ENCODE measurements at regions of chr22 and their contacts with region 1.

Region 1: DNA sequence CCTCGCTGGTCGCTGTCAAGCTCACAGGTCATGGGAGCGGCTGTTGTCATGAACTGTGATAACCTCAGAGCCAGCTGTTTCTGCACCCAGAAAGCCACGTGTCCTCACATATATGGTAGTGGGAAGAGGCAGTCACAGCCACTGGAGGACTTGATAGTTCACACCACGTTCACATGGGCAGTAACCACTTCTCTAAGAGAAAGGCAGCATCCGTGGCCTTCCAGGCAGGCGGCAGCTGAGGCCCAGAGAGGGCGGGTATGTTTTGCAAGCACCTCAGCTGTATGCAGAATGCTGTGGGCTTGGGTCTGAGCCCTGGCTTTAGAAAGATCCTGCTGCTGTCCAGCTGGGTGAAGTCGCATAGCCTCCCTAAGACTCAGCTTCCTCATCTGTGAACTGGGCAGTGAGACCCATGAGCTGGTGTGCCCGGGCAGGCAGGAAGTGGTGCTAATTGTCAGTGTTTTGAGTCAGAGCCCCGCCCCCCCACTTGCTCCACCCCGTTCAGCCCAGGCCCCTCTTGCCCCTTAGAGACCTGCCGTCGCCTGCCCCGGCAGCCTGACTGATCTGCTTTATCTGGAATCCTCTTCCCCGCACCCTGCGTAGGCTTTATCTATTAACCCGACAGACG is 13.3 kb downstream of the TTC38 start:
- DNase-seq: no peak
- ATAC-seq: no peak
- H3K4me3 ChIP-seq: no peak overlapping the region
- H3K27ac ChIP-seq: no peak overlapping the region
- H3K4me1 ChIP-seq: no peaks in the 10 kb centered on the region; a peak in 1 of 5 replicates
- H3K27me3 ChIP-seq: no peaks in the 10 kb centered on the region
- CTCF ChIP-seq: no peak
- EP300 ChIP-seq: no peak
- POLR2A ChIP-seq: no peak
- RAD21 ChIP-seq: no peak

Region 2: DNA sequence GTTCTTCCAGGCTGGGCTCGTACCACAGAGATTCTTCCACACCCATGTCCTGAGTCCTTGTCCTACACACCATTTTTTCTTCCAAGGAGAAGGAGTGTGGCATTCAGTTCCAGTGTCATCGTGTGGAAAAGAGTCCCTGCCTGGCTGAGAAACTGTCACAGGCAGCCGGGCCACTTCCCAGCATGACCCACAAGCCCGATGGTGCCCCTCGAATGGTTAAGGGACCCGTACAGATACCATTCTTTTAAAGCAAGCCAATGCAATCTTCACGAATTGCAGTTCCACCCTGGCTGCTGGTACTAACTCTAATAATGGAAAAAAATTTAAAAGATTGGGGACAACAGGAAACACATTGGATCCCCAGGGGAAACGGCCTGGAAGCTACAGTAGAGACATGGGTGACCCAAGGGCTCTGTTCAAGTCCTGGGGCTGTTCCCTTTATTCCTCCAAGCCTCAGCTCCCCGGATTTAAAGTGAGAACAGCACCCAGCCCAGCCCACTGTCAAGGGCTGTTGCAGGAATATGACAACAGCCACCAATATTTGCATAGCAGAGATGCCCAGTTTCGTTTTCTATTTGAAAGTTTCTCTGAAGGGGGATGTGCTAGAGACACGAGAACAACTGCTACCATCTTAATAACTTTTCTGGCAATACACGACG is 223.2 kb before region 1 on chr22:
- CTCF ChIA-PET with region 1: no interaction called
- POLR2A ChIA-PET with region 1: no interaction called
- in situ Hi-C with region 1: no loop called
- intact Hi-C with region 1: no loop called
- DNase-seq: no peak
- ATAC-seq: peak; percentile 75
- H3K4me3 ChIP-seq: no peak overlapping the region
- H3K27ac ChIP-seq: no peak overlapping the region
- H3K4me1 ChIP-seq: peaks cover 4 to 28% of the 10 kb centered on the region in 2 experiments; a peak in 3 of 5 replicates
- H3K27me3 ChIP-seq: peaks cover 0 to 4% of the 10 kb centered on the region in 2 experiments; a peak in 1 of 5 replicates
- CTCF ChIP-seq: no peak
- EP300 ChIP-seq: no peak
- POLR2A ChIP-seq: no peak
- RAD21 ChIP-seq: no peak

Region 3: GRCh38 chr22:46267431-46268279 is 13.5 kb before region 1 on chr22 and contains the start of gene TTC38:
- CTCF ChIA-PET with region 1: no interaction called
- POLR2A ChIA-PET with region 1: interaction called, 28 read pairs
- in situ Hi-C with region 1: no loop called
- intact Hi-C with region 1: no loop called
- DNase-seq: peak; percentile 89 to 93 (median 91)
- ATAC-seq: peak; percentile 98
- H3K4me3 ChIP-seq: peak within 1 kb of the TSS; percentile 90
- H3K27ac ChIP-seq: peak within 1 kb of the TSS; percentile 69
- H3K4me1 ChIP-seq: peaks cover 0 to 24% of the 10 kb centered on the region in 2 experiments; a peak in 4 of 5 replicates
- H3K27me3 ChIP-seq: no peaks in the 10 kb centered on the region
- CTCF ChIP-seq: no peak
- EP300 ChIP-seq: no peak
- POLR2A ChIP-seq: peak; percentile 75
- RAD21 ChIP-seq: no peak
- polyA plus RNA-seq, gene TTC38: 0.84 to 2.5 TPM

Region 4: GRCh38 chr22:46296257-46297150 is 15.4 kb after region 1 on chr22 and contains the start of gene GTSE1:
- CTCF ChIA-PET with region 1: no interaction called
- POLR2A ChIA-PET with region 1: interaction called, 10 read pairs
- in situ Hi-C with region 1: no loop called
- intact Hi-C with region 1: no loop called
- DNase-seq: peak; percentile 92 to 97 (median 94)
- ATAC-seq: peak; percentile 97
- H3K4me3 ChIP-seq: peak within 1 kb of the TSS; percentile 74
- H3K27ac ChIP-seq: peak within 1 kb of the TSS; percentile 68
- H3K4me1 ChIP-seq: peaks cover 2 to 24% of the 10 kb centered on the region in 2 experiments; a peak in 4 of 5 replicates
- H3K27me3 ChIP-seq: no peaks in the 10 kb centered on the region
- CTCF ChIP-seq: peak; percentile 23 to 53 (median 49); a peak in 4 of 6 replicates
- EP300 ChIP-seq: no peak
- POLR2A ChIP-seq: peak; percentile 85
- RAD21 ChIP-seq: peak; percentile 33 to 56
- polyA plus RNA-seq, gene GTSE1: 2.5 to 3.5 TPM

Measured in K562 (cell line).